ENCODE measurements at regions of chr20 and their contacts with region 1.

Region 1: GRCh38 chr20:2914160-2914559 is 40.9 kb downstream of the PTPRA start:
- DNase-seq: peak in 1 of 4 experiments; percentile 20
- ATAC-seq: peak; percentile 69
- H3K4me3 ChIP-seq: no peak overlapping the region
- H3K27ac ChIP-seq: no peak overlapping the region
- H3K4me1 ChIP-seq: no peaks in the 10 kb centered on the region
- H3K27me3 ChIP-seq: no peaks in the 10 kb centered on the region
- CTCF ChIP-seq: peak in 2 of 3 experiments; percentile 19 to 52; a peak in 2 of 6 replicates
- EP300 ChIP-seq: no peak
- POLR2A ChIP-seq: no peak
- RAD21 ChIP-seq: peak; percentile 40 to 59

Region 2: DNA sequence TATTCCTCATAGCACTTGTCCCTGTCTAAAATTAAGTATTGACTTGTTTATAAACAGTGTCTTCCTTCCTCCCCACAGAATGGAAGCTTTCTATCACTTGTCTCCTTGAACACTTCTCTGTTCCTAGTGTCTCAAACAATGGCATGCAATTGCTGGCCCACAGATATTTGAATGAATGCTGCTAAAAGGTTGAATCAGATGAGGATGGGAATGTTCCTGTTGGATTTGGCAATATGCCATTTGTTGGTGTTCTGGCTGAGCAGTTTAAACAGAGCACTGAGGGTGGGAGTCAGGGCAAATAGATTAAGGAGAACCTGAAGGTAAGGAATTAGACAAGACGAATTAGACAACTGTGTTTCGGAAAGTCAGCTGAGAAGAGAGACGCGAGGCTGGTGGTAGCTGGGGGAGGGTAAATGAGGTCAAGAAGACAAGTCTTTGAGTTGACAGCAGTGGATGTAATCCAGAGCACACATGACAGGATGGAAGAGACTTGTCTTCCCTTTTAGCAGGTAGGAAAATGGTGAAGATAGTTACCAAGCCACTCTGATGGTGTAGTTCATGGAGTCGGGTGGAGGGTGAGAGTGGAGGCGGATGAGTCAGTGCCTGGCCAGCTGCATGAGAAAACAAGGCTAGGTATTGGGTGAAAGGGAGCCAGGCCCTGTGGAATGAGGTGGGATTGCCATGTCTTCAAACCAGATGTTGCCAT is 70.9 kb after region 1 on chr20:
- CTCF ChIA-PET with region 1: no interaction called
- POLR2A ChIA-PET with region 1: no interaction called
- in situ Hi-C with region 1: no loop called
- intact Hi-C with region 1: loop called (anchors 5 kb)
- DNase-seq: peak in 2 of 4 experiments; percentile 13
- ATAC-seq: no peak
- H3K4me3 ChIP-seq: no peak overlapping the region
- H3K27ac ChIP-seq: no peak overlapping the region; the same call in 2 of the 3 replicates
- H3K4me1 ChIP-seq: no peaks in the 10 kb centered on the region
- H3K27me3 ChIP-seq: no peaks in the 10 kb centered on the region
- CTCF ChIP-seq: no peak
- EP300 ChIP-seq: no peak
- POLR2A ChIP-seq: no peak
- RAD21 ChIP-seq: no peak

Region 3: DNA sequence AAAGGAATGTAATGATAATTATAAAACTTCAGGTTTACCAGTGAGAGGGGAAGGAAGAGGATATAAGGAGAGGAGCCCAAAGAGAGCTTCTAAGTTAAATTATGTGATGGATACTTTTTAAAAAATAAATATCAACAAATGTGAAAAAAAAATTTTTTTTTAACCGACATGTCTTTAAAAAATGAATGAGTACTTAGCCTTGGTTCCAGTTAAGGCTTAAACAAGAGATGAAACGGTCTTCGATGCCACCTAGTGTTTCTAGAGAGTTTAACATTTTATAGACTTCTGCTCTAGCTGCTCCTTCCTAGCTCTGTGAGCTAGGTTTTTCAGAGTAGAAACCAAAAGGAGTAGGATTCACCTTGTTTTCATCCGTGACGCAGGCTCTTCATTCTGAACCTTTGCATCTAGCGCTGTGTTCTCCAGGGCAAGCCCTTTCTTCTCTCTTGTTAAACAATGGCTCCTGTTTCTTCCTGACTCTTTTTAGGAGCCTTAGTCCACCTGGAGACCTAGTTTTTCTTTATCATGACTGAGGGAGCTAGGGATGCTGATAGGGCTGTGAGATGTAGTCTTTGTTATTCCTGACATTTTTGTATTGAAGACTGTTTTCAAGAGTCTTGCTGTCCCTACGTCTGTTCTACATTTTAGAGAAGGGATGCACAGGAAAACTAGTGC is 86.8 kb after region 1 on chr20:
- CTCF ChIA-PET with region 1: interaction called, 4 read pairs
- POLR2A ChIA-PET with region 1: no interaction called
- in situ Hi-C with region 1: no loop called
- intact Hi-C with region 1: loop called (anchors 1 kb)
- DNase-seq: peak; percentile 16 to 59 (median 20)
- ATAC-seq: peak; percentile 88
- H3K4me3 ChIP-seq: no peak overlapping the region
- H3K27ac ChIP-seq: no peak overlapping the region
- H3K4me1 ChIP-seq: no peaks in the 10 kb centered on the region
- H3K27me3 ChIP-seq: no peaks in the 10 kb centered on the region
- CTCF ChIP-seq: peak in 2 of 3 experiments; percentile 49 to 60; a peak in 4 of 6 replicates
- EP300 ChIP-seq: no peak
- POLR2A ChIP-seq: no peak
- RAD21 ChIP-seq: peak; percentile 42 to 68